Mucosa of descending colon (tissue), 3 donors: ENCODE measurements at regions of chr3 and their contacts with region 1.

Region 1: DNA sequence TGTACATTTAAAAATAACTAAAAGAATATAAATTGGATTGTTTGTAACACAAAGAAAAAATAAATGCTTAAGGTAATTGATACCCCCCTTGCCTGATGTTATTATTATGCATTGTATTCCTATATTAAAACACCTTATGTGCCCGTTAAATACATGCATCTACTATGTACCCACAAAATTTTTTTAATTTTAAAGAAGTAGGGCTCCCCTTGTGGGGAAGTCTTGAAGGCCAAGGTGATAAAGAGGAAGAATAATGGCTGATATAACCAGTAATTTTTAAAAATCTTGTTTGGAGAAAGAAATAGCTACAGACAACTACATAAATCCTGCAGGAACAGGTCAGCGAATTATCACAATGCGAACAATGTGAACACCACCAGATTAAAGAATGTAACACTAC is 451.7 kb upstream of the ARHGEF26 start:
- DNase-seq: no peak
- ATAC-seq: no peak
- H3K4me3 ChIP-seq: no peak overlapping the region
- H3K4me1 ChIP-seq: no peaks in the 10 kb centered on the region
- CTCF ChIP-seq: no peak

Region 2: DNA sequence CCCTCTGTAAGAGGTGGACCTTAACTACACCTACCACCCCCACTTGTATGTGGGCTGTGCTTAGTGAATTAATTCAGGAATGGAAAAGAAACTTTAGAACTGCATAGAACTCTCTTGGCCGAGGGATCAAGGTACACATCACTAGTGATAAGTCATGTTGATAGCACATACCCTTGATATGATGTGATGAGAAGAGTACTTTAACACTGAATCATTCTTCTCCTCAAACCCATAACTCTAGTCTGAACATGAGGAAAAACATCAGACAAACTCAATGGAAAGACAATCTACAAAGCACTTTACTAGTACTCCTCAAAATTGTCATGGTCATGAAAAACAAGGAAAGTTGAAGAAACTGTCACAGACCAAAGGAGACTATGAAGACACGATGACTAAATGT is 747.0 kb before region 1 on chr3:
- intact Hi-C with region 1: loop called in 1 of 2 experiments (anchors 10 kb)
- DNase-seq: no peak
- ATAC-seq: no peak
- H3K4me3 ChIP-seq: no peak overlapping the region
- H3K4me1 ChIP-seq: no peaks in the 10 kb centered on the region
- CTCF ChIP-seq: no peak